Activated CD4-positive, alpha-beta memory T cell treated with anti-CD3 and anti-CD28 coated beads, Interleukin-2, amount 10 ng/mL, durations not matched to agents 7 days and 5 days (primary cell): ENCODE measurements at regions of chr1 and their contacts with region 1.

Region 1: DNA sequence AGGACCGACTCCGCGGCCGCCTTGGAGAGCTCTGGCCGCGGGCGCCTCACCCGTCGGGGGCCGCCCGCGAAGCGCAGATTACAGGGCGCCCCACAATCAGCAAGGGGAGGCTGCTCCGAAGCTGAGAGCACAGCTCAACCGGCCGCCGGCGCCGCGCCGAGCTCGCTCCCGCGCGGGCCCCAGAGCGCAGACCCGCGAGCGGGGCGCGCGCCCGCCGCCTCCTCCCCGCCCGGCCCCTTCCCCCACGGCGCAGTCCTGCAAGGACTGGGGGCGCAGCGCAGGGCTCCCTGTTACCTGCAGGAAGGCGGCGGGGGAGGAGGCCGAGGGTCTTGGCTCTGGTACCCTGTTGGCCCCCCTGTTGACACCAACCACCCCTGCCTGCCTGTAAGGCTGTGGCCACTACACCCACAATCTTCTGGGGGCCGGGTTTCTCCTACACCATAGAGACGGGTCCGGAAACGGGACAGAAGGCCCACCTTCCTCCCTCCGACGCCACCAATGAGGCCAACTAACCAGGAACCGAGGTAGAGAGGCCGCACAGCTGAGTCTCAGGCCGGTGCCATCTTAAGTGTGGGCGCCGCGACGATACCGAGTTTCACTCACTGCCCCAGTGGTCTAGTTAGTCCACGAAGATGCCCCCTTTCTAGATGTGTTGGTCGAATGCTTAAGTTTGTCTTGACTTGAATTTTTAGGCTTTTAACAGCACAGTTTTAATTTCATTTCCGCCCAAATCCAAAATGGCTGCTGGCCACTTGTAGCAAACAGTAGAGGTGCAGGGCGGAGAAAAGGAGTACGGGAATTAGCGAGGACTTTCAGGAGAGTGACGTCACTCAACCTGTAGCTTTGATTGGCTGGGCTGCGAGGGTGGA is at the start of gene SCYL3:
- DNase-seq: peak; percentile 90
- H3K4me3 Mint-ChIP-seq: peak within 1 kb of the TSS; percentile 73
- H3K27ac Mint-ChIP-seq: peak within 1 kb of the TSS; percentile 95
- H3K4me1 Mint-ChIP-seq: peaks cover 50% of the 10 kb centered on the region
- H3K27me3 Mint-ChIP-seq: peaks cover 8% of the 10 kb centered on the region
- total RNA-seq, gene SCYL3: 16.1 to 16.8 TPM

Region 2: DNA sequence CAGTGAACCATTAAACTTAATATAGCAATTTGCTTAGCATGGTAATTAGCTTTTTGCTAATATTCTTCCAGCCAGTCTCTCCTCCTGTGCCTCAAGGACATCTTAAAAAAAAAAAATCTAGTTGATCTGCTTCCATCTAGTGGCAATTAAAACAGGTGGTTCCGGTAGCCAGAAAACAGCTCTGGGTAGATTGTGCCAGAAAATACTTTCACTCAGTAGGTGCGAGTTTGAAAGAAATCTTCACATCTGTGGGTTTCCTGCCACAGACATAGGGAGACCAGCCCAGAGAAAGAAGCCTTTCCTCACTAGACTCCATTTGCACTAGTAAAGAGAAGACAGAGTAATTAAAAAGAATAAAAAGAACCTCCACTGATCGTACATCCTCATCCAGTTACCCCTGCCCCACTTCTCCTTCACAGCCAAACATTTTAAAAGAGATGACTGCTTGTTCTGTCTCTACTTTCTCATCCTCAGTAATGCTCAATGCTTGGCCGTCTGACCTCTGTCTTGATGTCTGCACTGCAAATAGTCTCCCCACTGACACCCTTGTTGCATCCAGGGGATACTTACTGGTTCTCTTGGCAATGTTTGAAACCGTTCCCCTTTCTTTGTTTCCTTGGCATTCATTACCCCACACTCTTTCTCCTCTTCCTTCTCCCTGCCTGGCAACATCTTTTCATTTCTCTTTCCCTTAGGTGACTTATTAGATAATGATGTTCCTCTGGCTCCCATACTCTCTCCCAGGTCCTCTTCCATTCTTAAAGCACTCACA is 199.2 kb before region 1 on chr1:
- CTCF ChIA-PET with region 1: interaction called, 3 read pairs
- POLR2A ChIA-PET with region 1: interaction called, 20 read pairs
- DNase-seq: peak; percentile 65
- H3K4me3 Mint-ChIP-seq: peak overlapping the region; percentile 31
- H3K27ac Mint-ChIP-seq: peak overlapping the region; percentile 88
- H3K4me1 Mint-ChIP-seq: peaks cover 96% of the 10 kb centered on the region
- H3K27me3 Mint-ChIP-seq: no peaks in the 10 kb centered on the region

Region 3: GRCh38 chr1:169853341-169853740 is 40.4 kb before region 1 on chr1:
- CTCF ChIA-PET with region 1: interaction called, 3 read pairs
- POLR2A ChIA-PET with region 1: interaction called, 18 read pairs
- DNase-seq: no peak
- H3K4me3 Mint-ChIP-seq: no peak overlapping the region
- H3K27ac Mint-ChIP-seq: no peak overlapping the region
- H3K4me1 Mint-ChIP-seq: peaks cover 2% of the 10 kb centered on the region
- H3K27me3 Mint-ChIP-seq: no peaks in the 10 kb centered on the region

Region 4: DNA sequence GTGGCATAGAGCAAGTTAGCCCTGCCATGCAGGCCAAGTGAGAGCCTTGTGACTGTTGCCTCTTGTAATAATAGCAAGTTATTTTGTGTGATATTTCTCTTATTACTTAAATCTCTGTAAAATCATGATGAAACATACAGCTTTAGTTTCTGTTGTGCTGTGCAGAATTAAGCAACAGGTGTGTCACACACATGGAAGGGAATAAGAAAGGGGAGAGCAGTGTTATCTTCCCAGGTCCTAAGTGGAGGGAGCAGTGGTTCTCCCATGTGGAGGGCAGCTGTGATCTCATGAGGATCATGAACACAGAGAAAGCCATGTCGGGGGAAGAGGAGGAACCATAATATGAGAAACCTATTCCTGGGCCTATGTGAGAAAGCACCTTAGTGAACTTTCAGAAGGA is 25.2 kb after region 1 on chr1:
- CTCF ChIA-PET with region 1: interaction called, 5 read pairs
- POLR2A ChIA-PET with region 1: interaction called, 14 read pairs
- DNase-seq: no peak
- H3K4me3 Mint-ChIP-seq: no peak overlapping the region
- H3K27ac Mint-ChIP-seq: no peak overlapping the region
- H3K4me1 Mint-ChIP-seq: peaks cover 24% of the 10 kb centered on the region
- H3K27me3 Mint-ChIP-seq: no peaks in the 10 kb centered on the region

Region 5: GRCh38 chr1:170074250-170075157 is 180.8 kb after region 1 on chr1 and contains the start of gene KIFAP3:
- CTCF ChIA-PET with region 1: no interaction called
- POLR2A ChIA-PET with region 1: interaction called, 26 read pairs
- DNase-seq: peak; percentile 97
- H3K4me3 Mint-ChIP-seq: peak within 1 kb of the TSS; percentile 92
- H3K27ac Mint-ChIP-seq: peak within 1 kb of the TSS; percentile 79
- H3K4me1 Mint-ChIP-seq: peaks cover 54% of the 10 kb centered on the region
- H3K27me3 Mint-ChIP-seq: no peaks in the 10 kb centered on the region
- total RNA-seq, gene KIFAP3: 27.7 to 28.0 TPM